Activated CD4-positive, alpha-beta T cell treated with anti-CD3 and anti-CD28 coated beads, Interleukin-2, amount 10 ng/mL, durations not matched to agents 7 days and 5 days (primary cell): ENCODE measurements at regions of chr22 and their contacts with region 1.

Region 1: GRCh38 chr22:39514373-39514973 is 5.9 kb upstream of the ATF4 start:
- DNase-seq: peak; percentile 65
- H3K4me3 Mint-ChIP-seq: no peak overlapping the region
- H3K27ac Mint-ChIP-seq: no peak overlapping the region
- H3K4me1 Mint-ChIP-seq: peaks cover 40% of the 10 kb centered on the region
- H3K27me3 Mint-ChIP-seq: no peaks in the 10 kb centered on the region

Region 2: DNA sequence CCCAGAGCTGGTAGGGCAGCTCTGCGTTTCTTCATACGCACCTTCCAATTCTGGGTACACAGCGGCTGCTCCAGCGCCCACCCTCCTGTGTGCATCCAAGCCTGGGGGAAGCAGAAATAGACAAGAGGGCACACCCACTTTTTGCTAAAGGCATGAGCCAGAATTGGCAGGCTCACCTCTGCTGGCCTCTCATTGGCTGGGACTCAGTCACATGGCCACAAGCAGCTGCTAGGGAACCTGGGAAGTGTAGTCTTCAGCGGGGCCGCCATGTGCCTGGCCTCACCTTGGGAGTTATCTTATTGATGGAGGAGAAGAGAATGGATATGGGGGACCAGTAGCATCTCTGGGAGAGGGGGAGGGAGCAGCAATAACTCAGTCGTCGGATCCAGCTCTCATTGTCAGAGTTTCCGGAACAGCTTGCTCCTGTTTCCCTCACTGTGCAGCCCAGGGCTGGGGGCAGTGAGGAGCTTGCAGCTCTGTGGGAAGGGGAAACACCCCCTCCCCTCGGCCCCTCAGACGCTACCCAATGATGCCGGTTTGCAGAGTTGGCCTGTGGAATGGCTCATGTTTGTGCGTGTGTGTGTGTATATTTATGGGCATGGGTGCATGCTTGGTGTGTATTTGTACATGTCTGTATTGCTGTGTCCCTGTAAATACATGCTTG is 24.2 kb before region 1 on chr22:
- CTCF ChIA-PET with region 1: interaction called, 24 read pairs
- POLR2A ChIA-PET with region 1: no interaction called
- DNase-seq: peak; percentile 82
- H3K4me3 Mint-ChIP-seq: no peak overlapping the region
- H3K27ac Mint-ChIP-seq: no peak overlapping the region
- H3K4me1 Mint-ChIP-seq: peaks cover 21% of the 10 kb centered on the region
- H3K27me3 Mint-ChIP-seq: no peaks in the 10 kb centered on the region